GM12878 (cell line): ENCODE measurements at regions of chr2 and their contacts with region 1.

Region 1: GRCh38 chr2:44392338-44392943 is 30.7 kb downstream of the CAMKMT start:
- DNase-seq: no peak
- ATAC-seq: peak; percentile 47; the same call in 2 of the 3 replicates
- H3K4me3 ChIP-seq: no peak overlapping the region
- H3K27ac ChIP-seq: no peak overlapping the region
- H3K4me1 ChIP-seq: no peaks in the 10 kb centered on the region
- H3K27me3 ChIP-seq: no peaks in the 10 kb centered on the region
- CTCF ChIP-seq: peak; percentile 41 to 56 (median 50); a peak in 5 of 6 replicates
- EP300 ChIP-seq: no peak
- POLR2A ChIP-seq: no peak
- RAD21 ChIP-seq: peak; percentile 67

Region 2: DNA sequence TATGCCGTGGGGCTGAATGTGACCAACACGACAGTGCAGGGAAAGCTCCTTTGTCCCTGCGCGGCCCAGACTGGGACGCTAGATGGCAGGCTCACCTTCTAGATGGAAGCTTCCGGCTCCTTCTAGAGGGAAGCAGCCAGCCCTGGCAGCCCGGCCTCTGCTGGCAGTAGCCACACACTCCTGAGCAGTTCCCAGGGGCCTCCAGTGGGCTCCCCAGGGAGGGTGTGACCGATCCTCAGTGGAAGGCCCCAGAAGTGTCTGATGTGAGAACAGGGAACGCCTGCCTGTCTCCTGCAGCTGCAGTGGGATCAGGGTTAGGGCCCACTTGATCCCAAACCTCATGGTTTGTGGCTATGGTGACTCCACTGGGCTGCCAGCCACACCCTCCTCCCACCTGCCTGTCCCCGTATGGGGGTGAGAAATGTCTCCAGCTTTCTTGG is 348.1 kb before region 1 on chr2:
- CTCF ChIA-PET with region 1: interaction called, 12 read pairs
- POLR2A ChIA-PET with region 1: no interaction called
- RAD21 ChIA-PET with region 1: interaction called, 7 read pairs
- SMC1A ChIA-PET with region 1: interaction called, 4 read pairs
- in situ Hi-C with region 1: no loop called
- intact Hi-C with region 1: loop called (anchors 2 kb)
- DNase-seq: peak; percentile 44
- ATAC-seq: peak; percentile 100
- H3K4me3 ChIP-seq: no peak overlapping the region
- H3K27ac ChIP-seq: no peak overlapping the region
- H3K4me1 ChIP-seq: peaks cover 5% of the 10 kb centered on the region
- H3K27me3 ChIP-seq: no peaks in the 10 kb centered on the region
- CTCF ChIP-seq: peak; percentile 94 to 98 (median 94); a peak in 5 of 6 replicates
- EP300 ChIP-seq: no peak; a peak in 1 of 4 replicates
- POLR2A ChIP-seq: no peak
- RAD21 ChIP-seq: peak; percentile 92

Region 3: DNA sequence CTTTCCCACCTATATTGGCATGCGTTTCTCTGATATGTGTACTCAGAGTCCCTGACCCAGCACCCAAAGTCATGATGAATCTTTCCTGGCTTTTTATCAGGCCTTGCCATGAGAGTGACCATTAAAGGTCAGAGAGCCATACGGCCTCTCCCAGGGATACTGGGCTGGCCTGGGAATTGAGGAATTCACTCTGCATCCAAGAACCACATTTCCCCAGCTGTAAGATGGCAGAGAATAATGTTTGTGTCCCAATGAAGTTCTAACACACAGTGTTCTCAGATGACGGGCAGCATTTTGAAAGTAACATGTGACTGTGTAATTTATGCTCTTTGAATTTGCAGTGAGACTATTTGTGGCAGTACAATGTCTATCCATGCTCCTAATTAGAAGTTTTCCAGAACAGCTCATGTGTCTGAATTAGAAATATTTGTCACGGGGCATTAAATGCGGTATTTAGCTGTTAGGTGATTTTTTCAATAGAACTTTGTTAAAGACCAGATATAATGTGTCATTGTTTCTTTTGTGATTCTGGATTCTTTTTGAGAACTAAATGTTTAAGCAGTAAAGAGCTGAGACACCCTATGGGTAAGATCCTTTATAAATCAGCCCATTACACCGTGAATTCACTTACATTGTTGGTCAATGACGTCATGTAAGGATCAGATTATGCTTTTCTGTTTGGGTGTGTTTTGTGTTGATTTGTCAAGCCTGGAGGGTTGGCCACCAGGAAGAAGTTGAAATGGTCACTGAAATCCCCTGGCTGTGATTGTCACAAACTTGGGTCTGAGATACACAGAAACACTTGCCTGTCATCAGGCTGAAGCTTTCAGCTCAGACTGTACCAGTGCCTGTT is 124.4 kb before region 1 on chr2:
- CTCF ChIA-PET with region 1: no interaction called
- POLR2A ChIA-PET with region 1: no interaction called
- RAD21 ChIA-PET with region 1: no interaction called
- SMC1A ChIA-PET with region 1: no interaction called
- in situ Hi-C with region 1: no loop called
- intact Hi-C with region 1: no loop called
- DNase-seq: no peak
- ATAC-seq: no peak
- H3K4me3 ChIP-seq: no peak overlapping the region
- H3K27ac ChIP-seq: no peak overlapping the region
- H3K4me1 ChIP-seq: no peaks in the 10 kb centered on the region
- H3K27me3 ChIP-seq: no peaks in the 10 kb centered on the region
- CTCF ChIP-seq: no peak
- EP300 ChIP-seq: no peak
- POLR2A ChIP-seq: no peak
- RAD21 ChIP-seq: no peak

Region 4: GRCh38 chr2:44348400-44348799 is 44.0 kb before region 1 on chr2:
- CTCF ChIA-PET with region 1: interaction called, 12 read pairs
- POLR2A ChIA-PET with region 1: no interaction called
- RAD21 ChIA-PET with region 1: no interaction called
- SMC1A ChIA-PET with region 1: no interaction called
- in situ Hi-C with region 1: no loop called
- intact Hi-C with region 1: no loop called
- DNase-seq: no peak
- ATAC-seq: no peak
- H3K4me3 ChIP-seq: no peak overlapping the region
- H3K27ac ChIP-seq: no peak overlapping the region
- H3K4me1 ChIP-seq: no peaks in the 10 kb centered on the region
- H3K27me3 ChIP-seq: no peaks in the 10 kb centered on the region
- CTCF ChIP-seq: no peak
- EP300 ChIP-seq: no peak
- POLR2A ChIP-seq: no peak
- RAD21 ChIP-seq: no peak

Region 5: DNA sequence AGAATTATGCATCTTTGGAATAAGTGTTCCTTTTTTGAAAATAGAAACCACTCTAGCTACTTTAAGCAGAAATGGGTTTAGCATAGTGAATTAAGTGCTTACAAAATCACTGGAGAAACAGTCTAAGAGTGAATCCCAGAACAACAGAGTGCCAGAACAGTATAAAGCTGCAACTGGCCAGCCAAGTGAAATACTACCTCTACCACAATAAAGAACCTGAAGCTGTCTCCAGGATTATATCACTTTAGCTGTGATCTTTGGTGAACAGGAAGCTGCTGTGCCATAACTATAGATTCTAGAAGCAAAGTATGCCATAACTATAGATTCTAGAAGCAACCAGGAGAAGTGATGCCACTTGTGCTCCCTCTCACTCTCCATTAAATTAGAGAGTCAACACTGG is 23.0 kb before region 1 on chr2:
- CTCF ChIA-PET with region 1: interaction called, 11 read pairs
- POLR2A ChIA-PET with region 1: interaction called, 3 read pairs
- RAD21 ChIA-PET with region 1: no interaction called
- SMC1A ChIA-PET with region 1: interaction called, 4 read pairs
- in situ Hi-C with region 1: no loop called
- intact Hi-C with region 1: no loop called
- DNase-seq: no peak
- ATAC-seq: peak; percentile 46
- H3K4me3 ChIP-seq: no peak overlapping the region
- H3K27ac ChIP-seq: no peak overlapping the region
- H3K4me1 ChIP-seq: no peaks in the 10 kb centered on the region
- H3K27me3 ChIP-seq: no peaks in the 10 kb centered on the region
- CTCF ChIP-seq: no peak
- EP300 ChIP-seq: no peak
- POLR2A ChIP-seq: no peak
- RAD21 ChIP-seq: no peak

Region 6: GRCh38 chr2:44420725-44421124 is 28.3 kb after region 1 on chr2:
- CTCF ChIA-PET with region 1: interaction called, 12 read pairs
- POLR2A ChIA-PET with region 1: no interaction called
- RAD21 ChIA-PET with region 1: no interaction called
- SMC1A ChIA-PET with region 1: interaction called, 4 read pairs
- in situ Hi-C with region 1: no loop called
- intact Hi-C with region 1: no loop called
- DNase-seq: no peak
- ATAC-seq: no peak
- H3K4me3 ChIP-seq: no peak overlapping the region
- H3K27ac ChIP-seq: no peak overlapping the region
- H3K4me1 ChIP-seq: no peaks in the 10 kb centered on the region
- H3K27me3 ChIP-seq: no peaks in the 10 kb centered on the region
- CTCF ChIP-seq: no peak
- EP300 ChIP-seq: no peak
- POLR2A ChIP-seq: no peak
- RAD21 ChIP-seq: no peak

Region 7: DNA sequence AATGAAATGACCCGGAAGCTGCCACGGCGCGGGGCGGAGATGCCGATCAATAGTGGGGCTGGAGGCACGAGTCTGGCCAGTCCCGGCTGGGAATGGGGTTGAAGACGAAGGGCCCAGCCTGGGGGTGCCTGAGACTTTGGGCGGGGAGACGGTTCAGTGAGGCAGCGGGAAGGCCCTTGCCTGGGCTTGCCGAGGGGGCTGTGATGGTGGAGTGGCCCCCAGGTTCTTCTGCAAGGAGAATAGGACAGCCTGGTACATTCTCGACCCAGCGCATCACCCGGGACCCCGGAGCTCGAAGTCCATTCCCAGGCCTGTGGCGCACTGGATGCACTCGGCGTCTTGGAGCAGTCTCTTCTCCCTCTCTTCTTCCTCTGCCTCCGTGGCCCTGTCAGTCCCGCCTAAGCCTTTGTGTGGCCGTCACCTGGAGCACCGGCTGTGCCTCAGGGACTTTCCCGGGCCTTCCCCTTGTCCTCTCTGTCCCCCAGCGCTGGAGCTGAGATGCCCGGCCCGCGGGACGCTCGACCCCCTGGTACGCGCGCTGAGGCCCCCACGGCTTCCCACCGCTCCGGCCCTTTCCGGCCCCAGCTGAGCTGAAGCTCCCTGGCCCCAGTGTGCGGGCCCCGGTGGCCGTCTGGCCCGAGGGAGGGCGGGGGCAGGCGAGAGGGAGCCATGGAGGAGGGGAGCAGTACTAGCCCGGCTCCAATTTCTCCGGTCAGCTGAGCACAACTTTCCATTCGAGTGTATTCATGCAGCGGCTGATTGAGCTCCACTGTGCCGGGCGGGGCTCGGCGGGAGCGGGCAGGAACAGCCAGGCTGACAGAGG is 557.1 kb after region 1 on chr2:
- CTCF ChIA-PET with region 1: interaction called, 161 read pairs
- POLR2A ChIA-PET with region 1: no interaction called
- RAD21 ChIA-PET with region 1: interaction called, 56 read pairs
- SMC1A ChIA-PET with region 1: interaction called, 64 read pairs
- in situ Hi-C with region 1: loop called (anchors 5 kb)
- intact Hi-C with region 1: no loop called
- DNase-seq: no peak
- ATAC-seq: peak; percentile 29
- H3K4me3 ChIP-seq: peak overlapping the region; percentile 32; the same call in 1 of the 2 replicates
- H3K27ac ChIP-seq: no peak overlapping the region
- H3K4me1 ChIP-seq: peaks cover 9% of the 10 kb centered on the region
- H3K27me3 ChIP-seq: peaks cover 2 to 23% of the 10 kb centered on the region in 2 experiments
- CTCF ChIP-seq: no peak
- EP300 ChIP-seq: no peak
- POLR2A ChIP-seq: no peak
- RAD21 ChIP-seq: no peak

Region 8: GRCh38 chr2:44974064-44974715 is 581.7 kb after region 1 on chr2:
- CTCF ChIA-PET with region 1: interaction called, 13 read pairs
- POLR2A ChIA-PET with region 1: no interaction called
- RAD21 ChIA-PET with region 1: interaction called, 3 read pairs
- SMC1A ChIA-PET with region 1: no interaction called
- in situ Hi-C with region 1: no loop called
- intact Hi-C with region 1: no loop called
- DNase-seq: no peak
- ATAC-seq: peak; percentile 72
- H3K4me3 ChIP-seq: no peak overlapping the region
- H3K27ac ChIP-seq: no peak overlapping the region
- H3K4me1 ChIP-seq: no peaks in the 10 kb centered on the region
- H3K27me3 ChIP-seq: no peaks in the 10 kb centered on the region; a peak in 1 of 4 replicates
- CTCF ChIP-seq: peak; percentile 37 to 54 (median 39); a peak in 5 of 6 replicates
- EP300 ChIP-seq: no peak
- POLR2A ChIP-seq: no peak
- RAD21 ChIP-seq: 0 out of 2 replicates have a peak, but pooled peaks have one; percentile 44